Naive thymus-derived CD4-positive, alpha-beta T cell (primary cell): ENCODE measurements at regions of chr20 and their contacts with region 1.

Region 1: GRCh38 chr20:24389686-24390085 is 79.7 kb upstream of the SYNDIG1 start:
- DNase-seq: peak in 8 of 9 donors; percentile 17 to 83 (median 74)
- ATAC-seq: peak; percentile 96
- H3K4me3 ChIP-seq: no peak overlapping the region
- H3K4me3 Mint-ChIP-seq: peak overlapping the region; percentile 26 to 80 (median 64)
- H3K27ac ChIP-seq: no peak overlapping the region
- H3K27ac Mint-ChIP-seq: peak overlapping the region in 8 of 9 donors; percentile 21 to 95 (median 78)
- H3K4me1 ChIP-seq: peaks cover 0 to 29% of the 10 kb centered on the region in 2 donors
- H3K4me1 Mint-ChIP-seq: peaks cover 16 to 73% (median 52%) of the 10 kb centered on the region in 7 donors
- H3K27me3 ChIP-seq: no peaks in the 10 kb centered on the region
- H3K27me3 Mint-ChIP-seq: peaks cover 0 to 2% (median 0%) of the 10 kb centered on the region in 5 donors

Region 2: GRCh38 chr20:24318569-24319352 is 70.9 kb before region 1 on chr20:
- CTCF ChIA-PET with region 1: no interaction called
- POLR2A ChIA-PET with region 1: no interaction called
- intact Hi-C with region 1: loop called in 1 of 2 experiments (anchors 5 kb)
- DNase-seq: no peak
- ATAC-seq: no peak
- H3K4me3 ChIP-seq: no peak overlapping the region
- H3K4me3 Mint-ChIP-seq: peak overlapping the region in 9 of 10 donors; percentile 31 to 75 (median 49)
- H3K27ac ChIP-seq: no peak overlapping the region
- H3K27ac Mint-ChIP-seq: peak overlapping the region in 8 of 9 donors; percentile 26 to 84 (median 66)
- H3K4me1 ChIP-seq: peaks cover 0 to 25% of the 10 kb centered on the region in 2 donors
- H3K4me1 Mint-ChIP-seq: peaks cover 15 to 41% (median 34%) of the 10 kb centered on the region in 7 donors
- H3K27me3 ChIP-seq: no peaks in the 10 kb centered on the region
- H3K27me3 Mint-ChIP-seq: peaks cover 0 to 3% (median 0%) of the 10 kb centered on the region in 5 donors

Region 3: GRCh38 chr20:24406750-24407510 is 17.2 kb after region 1 on chr20:
- CTCF ChIA-PET with region 1: no interaction called
- POLR2A ChIA-PET with region 1: interaction called, 7 read pairs
- intact Hi-C with region 1: loop called in 1 of 2 experiments (anchors 1 kb)
- DNase-seq: peak in 2 of 9 donors; percentile 8 to 15
- ATAC-seq: peak; percentile 20
- H3K4me3 ChIP-seq: no peak overlapping the region
- H3K4me3 Mint-ChIP-seq: peak overlapping the region; percentile 35 to 81 (median 65)
- H3K27ac ChIP-seq: peak overlapping the region; percentile 14
- H3K27ac Mint-ChIP-seq: peak overlapping the region; percentile 68 to 92 (median 85)
- H3K4me1 ChIP-seq: peaks cover 0 to 20% of the 10 kb centered on the region in 2 donors
- H3K4me1 Mint-ChIP-seq: peaks cover 8 to 31% (median 29%) of the 10 kb centered on the region in 7 donors
- H3K27me3 ChIP-seq: no peaks in the 10 kb centered on the region
- H3K27me3 Mint-ChIP-seq: peaks cover 0 to 3% (median 0%) of the 10 kb centered on the region in 5 donors

Region 4: GRCh38 chr20:24872291-24873024 is 482.8 kb after region 1 on chr20:
- CTCF ChIA-PET with region 1: no interaction called
- POLR2A ChIA-PET with region 1: no interaction called
- intact Hi-C with region 1: no loop called
- DNase-seq: no peak
- ATAC-seq: no peak
- H3K4me3 ChIP-seq: no peak overlapping the region
- H3K4me3 Mint-ChIP-seq: no peak overlapping the region
- H3K27ac ChIP-seq: no peak overlapping the region
- H3K27ac Mint-ChIP-seq: no peak overlapping the region
- H3K4me1 ChIP-seq: no peaks in the 10 kb centered on the region
- H3K4me1 Mint-ChIP-seq: no peaks in the 10 kb centered on the region
- H3K27me3 ChIP-seq: no peaks in the 10 kb centered on the region
- H3K27me3 Mint-ChIP-seq: peaks cover 0 to 33% (median 13%) of the 10 kb centered on the region in 5 donors